ENCODE measurements at regions of chr2 and their contacts with region 1.

Region 1: GRCh38 chr2:161223139-161223732 is 63.0 kb downstream of the TANK start:
- DNase-seq: peak in 1 of 2 experiments; percentile 49
- H3K4me3 ChIP-seq: no peak overlapping the region
- H3K4me3 Mint-ChIP-seq: no peak overlapping the region
- H3K27ac Mint-ChIP-seq: no peak overlapping the region
- H3K4me1 ChIP-seq: no peaks in the 10 kb centered on the region
- H3K4me1 Mint-ChIP-seq: peaks cover 7% of the 10 kb centered on the region
- H3K27me3 ChIP-seq: no peaks in the 10 kb centered on the region
- H3K27me3 Mint-ChIP-seq: no peaks in the 10 kb centered on the region
- CTCF ChIP-seq: peak; percentile 59 to 78

Region 2: DNA sequence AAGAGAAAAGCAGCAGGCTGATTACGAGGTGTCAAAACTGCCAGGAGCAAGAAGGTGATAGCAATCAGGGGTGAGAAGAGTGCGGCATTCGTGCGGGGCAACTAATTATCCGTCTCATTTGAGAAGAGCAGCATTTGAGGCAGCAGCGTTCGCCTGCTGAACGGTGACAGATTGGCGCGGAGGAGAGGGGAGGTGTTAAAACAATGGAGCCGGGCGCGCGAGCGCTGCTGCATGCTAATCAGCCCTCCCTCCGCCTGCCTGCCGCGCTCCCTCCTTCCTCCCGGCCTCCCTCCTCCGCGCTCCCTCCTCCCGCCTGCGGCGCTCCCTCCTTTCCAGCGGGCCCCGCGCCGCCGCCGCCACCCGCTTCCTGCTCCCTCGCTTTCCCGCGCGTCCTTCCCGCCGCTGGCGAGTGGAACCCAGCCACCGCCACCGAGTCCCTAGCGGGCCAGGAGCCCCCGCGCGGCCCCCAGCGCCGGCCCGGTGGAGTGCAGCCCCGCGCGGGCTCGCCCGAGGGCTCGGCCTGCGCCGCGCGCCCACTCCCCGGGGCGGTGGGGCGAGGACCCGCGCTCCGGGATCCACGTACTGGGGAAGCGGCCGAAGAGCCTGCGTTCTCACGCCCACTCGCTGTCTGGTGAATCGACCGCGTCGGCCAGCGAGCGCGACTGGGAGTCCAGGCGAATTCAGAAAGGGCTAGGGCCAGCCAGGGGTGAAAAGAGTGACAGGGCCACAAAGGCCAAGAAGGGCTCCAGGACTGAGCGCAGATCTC is 15.5 kb after region 1 on chr2:
- CTCF ChIA-PET with region 1: no interaction called
- POLR2A ChIA-PET with region 1: no interaction called
- intact Hi-C with region 1: loop called (anchors 2 kb)
- DNase-seq: peak; percentile 52 to 54
- H3K4me3 ChIP-seq: peak overlapping the region; percentile 60
- H3K4me3 Mint-ChIP-seq: peak overlapping the region; percentile 88
- H3K27ac Mint-ChIP-seq: peak overlapping the region; percentile 59
- H3K4me1 ChIP-seq: peaks cover 2% of the 10 kb centered on the region; the same call in 1 of the 2 replicates
- H3K4me1 Mint-ChIP-seq: no peaks in the 10 kb centered on the region
- H3K27me3 ChIP-seq: no peaks in the 10 kb centered on the region
- H3K27me3 Mint-ChIP-seq: no peaks in the 10 kb centered on the region
- CTCF ChIP-seq: no peak

Region 3: GRCh38 chr2:161250864-161251436 is 27.7 kb after region 1 on chr2:
- CTCF ChIA-PET with region 1: no interaction called
- POLR2A ChIA-PET with region 1: no interaction called
- intact Hi-C with region 1: no loop called
- DNase-seq: peak in 1 of 2 experiments; percentile 68
- H3K4me3 ChIP-seq: no peak overlapping the region
- H3K4me3 Mint-ChIP-seq: no peak overlapping the region
- H3K27ac Mint-ChIP-seq: no peak overlapping the region
- H3K4me1 ChIP-seq: no peaks in the 10 kb centered on the region
- H3K4me1 Mint-ChIP-seq: no peaks in the 10 kb centered on the region
- H3K27me3 ChIP-seq: no peaks in the 10 kb centered on the region
- H3K27me3 Mint-ChIP-seq: no peaks in the 10 kb centered on the region
- CTCF ChIP-seq: peak; percentile 63 to 77

Region 4: DNA sequence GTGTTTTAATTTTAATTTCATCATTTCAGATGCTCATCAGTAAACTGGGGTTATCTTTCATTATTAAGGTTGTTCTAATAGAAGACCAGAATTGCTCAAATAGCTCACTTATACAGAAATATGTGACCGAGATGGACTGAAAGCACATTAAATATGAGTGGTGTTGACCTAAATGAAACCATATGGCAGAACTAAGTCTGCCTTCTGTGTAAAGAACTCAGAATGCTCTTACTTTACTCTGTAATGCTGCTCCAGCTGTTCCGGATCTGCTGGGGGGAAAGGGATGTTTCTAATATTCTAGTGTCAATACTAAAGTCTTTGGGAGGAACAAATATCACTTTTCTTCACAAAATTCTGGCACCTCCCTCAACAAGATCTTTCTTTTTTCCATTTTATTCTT is 719.8 kb after region 1 on chr2:
- CTCF ChIA-PET with region 1: no interaction called
- POLR2A ChIA-PET with region 1: no interaction called
- intact Hi-C with region 1: no loop called
- DNase-seq: no peak
- H3K4me3 ChIP-seq: no peak overlapping the region
- H3K4me3 Mint-ChIP-seq: no peak overlapping the region
- H3K27ac Mint-ChIP-seq: no peak overlapping the region
- H3K4me1 ChIP-seq: no peaks in the 10 kb centered on the region
- H3K4me1 Mint-ChIP-seq: no peaks in the 10 kb centered on the region
- H3K27me3 ChIP-seq: no peaks in the 10 kb centered on the region; the same call in 1 of the 2 replicates
- H3K27me3 Mint-ChIP-seq: peaks cover 7% of the 10 kb centered on the region
- CTCF ChIP-seq: no peak